Right cardiac atrium (tissue), 5 donors: ENCODE measurements at regions of chr17 and their contacts with region 1.

Region 1: DNA sequence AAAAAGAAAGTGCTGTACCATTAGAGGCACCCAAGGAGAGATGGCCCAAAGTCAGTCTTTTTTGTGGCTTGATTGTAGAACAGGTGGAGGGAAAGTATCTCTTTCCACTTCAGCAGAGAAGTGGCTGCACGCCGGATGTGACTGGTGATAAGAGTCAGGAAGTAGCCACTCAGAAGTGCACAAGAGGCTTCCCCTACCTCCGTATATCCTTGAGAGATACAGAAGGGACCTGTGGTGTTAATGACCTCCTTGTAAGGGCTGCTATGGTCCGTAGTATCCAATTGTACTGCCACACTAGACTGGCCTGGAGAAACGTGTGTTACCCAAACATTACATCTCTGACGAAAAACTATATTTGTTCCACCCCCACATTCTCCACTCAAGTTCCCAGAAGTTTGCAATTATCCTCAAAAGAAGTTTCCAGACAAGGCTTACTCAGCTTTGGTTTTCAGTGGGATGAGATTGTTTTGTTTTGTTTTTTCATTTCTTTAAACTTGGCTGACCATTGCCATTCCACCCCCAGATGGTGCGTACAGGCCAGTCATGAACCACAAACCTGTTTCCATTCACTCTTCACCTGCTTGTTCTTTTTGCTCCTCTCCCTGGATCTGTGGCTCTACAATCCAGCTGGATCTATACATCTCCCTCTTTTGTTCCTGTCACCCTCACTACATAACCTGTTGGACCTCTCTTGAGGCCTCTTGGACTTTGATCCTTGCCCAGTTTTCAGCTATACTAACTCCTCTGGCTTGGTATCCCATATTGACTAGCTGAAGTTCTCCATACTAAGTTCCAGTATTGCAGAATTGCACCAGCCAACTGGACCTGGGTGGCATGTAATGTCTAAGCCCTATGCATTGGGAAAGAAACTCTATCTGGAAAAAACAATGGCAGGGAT is 20.7 kb upstream of the MED13 start:
- DNase-seq: no peak
- ATAC-seq: no peak
- H3K4me3 ChIP-seq: no peak overlapping the region
- H3K27ac ChIP-seq: no peak overlapping the region
- H3K4me1 ChIP-seq: no peaks in the 10 kb centered on the region
- H3K27me3 ChIP-seq: no peaks in the 10 kb centered on the region

Region 2: DNA sequence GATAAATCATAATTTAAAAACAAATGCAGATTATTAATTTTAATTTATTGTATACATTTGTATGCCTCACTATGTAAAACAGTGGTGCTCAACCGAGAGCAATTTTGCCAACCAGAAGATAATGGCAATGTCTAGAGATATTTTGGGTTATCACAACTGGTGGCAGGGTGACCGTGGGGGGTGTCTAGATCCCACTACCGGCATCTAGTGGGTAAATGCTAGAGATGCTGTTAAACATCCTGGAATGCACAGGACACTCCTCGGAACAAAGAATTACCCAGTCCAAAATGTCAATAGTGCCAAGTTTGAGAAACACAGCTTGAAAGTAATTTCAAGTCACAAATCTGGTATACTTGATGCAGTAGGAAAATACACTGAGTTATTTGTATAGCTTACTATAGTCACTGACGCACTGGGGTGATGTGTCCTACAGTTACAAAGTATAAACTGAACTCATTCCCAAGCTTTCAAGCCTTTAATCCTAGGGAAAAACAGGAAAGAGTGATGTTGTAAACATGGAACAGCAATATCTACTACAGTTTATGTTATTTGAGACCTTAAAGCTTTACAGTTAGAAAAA is 356.0 kb before region 1 on chr17:
- intact Hi-C with region 1: loop called in 1 of 4 experiments (anchors 10 kb)
- DNase-seq: no peak
- ATAC-seq: no peak
- H3K4me3 ChIP-seq: no peak overlapping the region
- H3K27ac ChIP-seq: no peak overlapping the region
- H3K4me1 ChIP-seq: no peaks in the 10 kb centered on the region
- H3K27me3 ChIP-seq: no peaks in the 10 kb centered on the region